Aorta (tissue), 5 donors: ENCODE measurements at regions of chr18 and their contacts with region 1.

Region 1: GRCh38 chr18:36580266-36580665 is 248.5 kb downstream of the TPGS2 start:
- DNase-seq: no peak
- ATAC-seq: peak; percentile 87
- H3K4me3 ChIP-seq: no peak overlapping the region
- H3K27ac ChIP-seq: peak overlapping the region; percentile 39 to 69
- H3K4me1 ChIP-seq: peaks cover 0 to 2% of the 10 kb centered on the region in 2 donors
- H3K27me3 ChIP-seq: no peaks in the 10 kb centered on the region

Region 2: DNA sequence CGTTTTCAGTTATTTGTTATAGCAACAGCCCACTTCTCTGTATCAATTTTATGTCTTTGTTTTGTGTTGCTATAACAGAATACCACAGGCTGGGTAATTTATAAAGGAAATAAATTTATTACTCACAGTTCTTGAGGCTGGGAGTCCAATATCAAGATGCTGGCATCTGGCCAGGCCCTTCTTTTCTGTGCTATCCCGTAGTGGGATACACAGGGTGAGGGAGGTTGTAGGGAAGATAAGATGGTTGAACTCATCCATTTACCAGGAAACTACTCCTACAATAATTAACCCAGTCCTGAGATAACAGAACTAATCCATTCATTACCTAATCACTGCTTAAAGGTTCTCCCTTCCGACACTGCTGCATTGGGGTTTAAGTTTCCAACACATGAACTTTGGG is 27.8 kb after region 1 on chr18:
- intact Hi-C with region 1: no loop called
- DNase-seq: no peak
- ATAC-seq: no peak
- H3K4me3 ChIP-seq: no peak overlapping the region
- H3K27ac ChIP-seq: no peak overlapping the region
- H3K4me1 ChIP-seq: no peaks in the 10 kb centered on the region
- H3K27me3 ChIP-seq: no peaks in the 10 kb centered on the region

Region 3: DNA sequence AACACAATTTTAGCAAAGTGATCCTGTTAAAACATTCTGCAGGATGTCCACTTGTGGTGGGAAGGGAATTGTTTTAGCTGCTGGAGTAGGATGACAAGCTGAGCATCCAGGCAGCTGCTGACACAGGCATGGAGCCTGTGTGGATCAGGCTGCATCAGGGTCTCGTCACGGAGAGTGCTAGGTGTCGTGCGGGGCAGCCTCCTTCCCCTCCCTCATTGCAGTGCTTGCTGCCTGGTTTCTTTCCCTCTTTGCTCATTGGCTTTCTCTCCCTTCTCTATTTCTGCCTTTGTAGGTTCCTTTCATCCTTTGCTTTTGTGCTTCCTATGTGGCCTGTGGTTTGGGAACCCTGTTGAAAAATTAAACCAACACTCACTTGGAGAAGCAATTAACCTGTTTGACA is 75.7 kb after region 1 on chr18:
- intact Hi-C with region 1: loop called in 1 of 2 experiments (anchors 5 kb)
- DNase-seq: no peak
- ATAC-seq: no peak
- H3K4me3 ChIP-seq: no peak overlapping the region
- H3K27ac ChIP-seq: peak overlapping the region; percentile 41 to 80
- H3K4me1 ChIP-seq: no peaks in the 10 kb centered on the region
- H3K27me3 ChIP-seq: no peaks in the 10 kb centered on the region

Region 4: DNA sequence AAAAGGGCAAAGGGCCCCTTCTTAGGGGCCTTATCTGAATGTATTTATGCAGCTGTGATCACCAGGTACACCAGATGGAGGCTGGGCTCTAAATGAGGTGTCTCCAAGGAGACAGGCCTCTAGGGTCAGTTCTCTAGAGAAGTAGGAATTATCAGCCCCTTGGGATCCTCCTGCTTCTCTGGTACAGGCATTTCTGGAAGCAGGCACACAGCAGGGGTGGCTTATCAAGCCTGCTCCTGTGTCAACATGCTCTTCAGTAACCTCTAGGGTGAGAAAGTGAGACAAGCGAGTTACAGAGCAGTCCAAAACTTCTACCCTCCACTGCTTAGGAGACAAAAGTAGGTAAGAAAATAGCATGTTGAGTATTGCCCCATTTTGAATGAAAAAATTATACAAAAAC is 234.7 kb after region 1 on chr18:
- intact Hi-C with region 1: no loop called
- DNase-seq: no peak
- ATAC-seq: no peak
- H3K4me3 ChIP-seq: no peak overlapping the region
- H3K27ac ChIP-seq: no peak overlapping the region
- H3K4me1 ChIP-seq: peaks cover 0 to 2% of the 10 kb centered on the region in 2 donors
- H3K27me3 ChIP-seq: no peaks in the 10 kb centered on the region